ENCODE measurements at regions of chr2 and their contacts with region 1.

Region 1: DNA sequence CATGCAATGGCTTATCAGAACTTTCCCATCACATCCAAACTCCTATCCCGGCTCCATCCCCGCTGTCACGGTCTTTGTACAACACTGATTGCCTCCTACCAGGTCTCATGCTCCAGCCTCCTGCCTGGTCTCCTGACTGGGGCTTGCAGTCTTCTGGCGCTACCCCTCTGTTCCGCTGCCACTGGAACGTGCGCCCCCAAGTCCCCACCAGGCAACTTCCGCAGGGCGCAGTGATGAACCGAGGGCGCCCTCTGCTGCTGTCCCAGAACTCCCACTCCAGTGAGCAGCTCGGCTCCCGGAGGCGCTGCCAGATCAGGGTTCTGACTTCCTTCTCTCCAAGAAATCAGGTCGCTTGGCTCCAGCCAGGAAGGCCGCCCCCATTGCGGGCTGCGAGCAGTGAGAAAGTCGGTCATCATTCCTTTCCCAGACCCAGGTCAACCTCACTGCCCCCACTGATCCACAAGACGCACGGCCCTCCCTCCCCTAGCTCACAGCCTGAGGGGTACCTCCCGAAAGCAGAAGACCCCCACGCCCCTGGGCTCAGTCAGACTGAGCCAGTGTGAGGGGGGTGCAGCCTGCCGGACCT is 43.9 kb upstream of the RAB11FIP5 start:
- DNase-seq: peak; percentile 83
- H3K4me3 ChIP-seq: peak overlapping the region; percentile 6 to 49; a peak in 1 of 4 replicates
- H3K27ac ChIP-seq: no peak overlapping the region
- H3K4me1 ChIP-seq: peaks cover 0 to 5% of the 10 kb centered on the region in 2 experiments; a peak in 1 of 4 replicates
- H3K27me3 ChIP-seq: no peaks in the 10 kb centered on the region
- CTCF ChIP-seq: peak; percentile 87
- EP300 ChIP-seq: no peak
- RAD21 ChIP-seq: peak; percentile 92

Region 2: GRCh38 chr2:72980535-72981217 is 176.0 kb before region 1 on chr2:
- CTCF ChIA-PET with region 1: interaction called, 11 read pairs
- POLR2A ChIA-PET with region 1: no interaction called
- DNase-seq: no peak
- H3K4me3 ChIP-seq: no peak overlapping the region
- H3K27ac ChIP-seq: no peak overlapping the region
- H3K4me1 ChIP-seq: peaks cover 0 to 24% of the 10 kb centered on the region in 2 experiments; a peak in 1 of 4 replicates
- H3K27me3 ChIP-seq: no peaks in the 10 kb centered on the region
- CTCF ChIP-seq: no peak
- EP300 ChIP-seq: no peak
- RAD21 ChIP-seq: no peak

Region 3: DNA sequence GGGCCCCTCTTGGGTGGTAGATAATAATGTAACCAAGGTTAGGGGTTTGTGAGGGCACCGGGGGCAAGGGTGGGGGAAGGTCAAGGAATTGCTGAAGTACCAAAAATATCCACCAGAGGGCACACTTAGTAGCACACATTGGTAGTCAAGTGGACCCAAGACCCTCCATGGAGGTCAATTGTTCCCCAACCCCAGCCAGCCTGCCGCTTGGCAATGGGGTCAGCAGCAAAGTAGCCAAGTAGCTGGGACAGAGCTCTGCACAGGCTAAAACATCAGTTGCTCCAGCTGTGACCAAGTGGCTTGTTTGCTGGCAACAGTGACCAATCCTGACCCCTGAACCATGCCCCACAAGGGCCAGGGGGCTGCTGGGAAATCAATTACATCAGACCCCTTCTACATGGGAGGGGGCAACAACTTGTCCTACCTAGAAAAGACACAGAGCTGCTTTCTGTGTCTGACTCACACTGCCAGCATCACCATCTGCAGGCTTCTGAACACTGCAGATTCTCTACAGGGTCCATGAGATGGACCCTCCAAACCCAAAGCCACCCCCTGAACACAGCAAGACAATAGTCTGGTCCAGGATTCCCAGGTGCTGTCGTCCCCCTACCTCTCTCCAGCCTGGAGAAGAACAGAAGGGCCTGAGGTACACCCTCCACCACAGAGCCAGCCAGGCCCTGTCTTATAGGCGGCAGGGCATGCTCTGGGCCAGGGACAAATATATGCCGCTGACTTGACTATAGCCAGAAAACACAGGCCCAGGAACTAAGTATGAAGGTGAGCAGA is 163.3 kb before region 1 on chr2:
- CTCF ChIA-PET with region 1: interaction called, 30 read pairs
- POLR2A ChIA-PET with region 1: no interaction called
- DNase-seq: peak; percentile 85
- H3K4me3 ChIP-seq: no peak overlapping the region; a peak in 1 of 4 replicates
- H3K27ac ChIP-seq: no peak overlapping the region
- H3K4me1 ChIP-seq: peaks cover 0 to 14% of the 10 kb centered on the region in 2 experiments; a peak in 1 of 4 replicates
- H3K27me3 ChIP-seq: no peaks in the 10 kb centered on the region
- CTCF ChIP-seq: peak; percentile 82
- EP300 ChIP-seq: no peak
- RAD21 ChIP-seq: peak; percentile 58

Region 4: GRCh38 chr2:73071360-73072133 is 85.1 kb before region 1 on chr2 and contains the start of gene SFXN5:
- CTCF ChIA-PET with region 1: interaction called, 267 read pairs
- POLR2A ChIA-PET with region 1: no interaction called
- DNase-seq: peak; percentile 99
- H3K4me3 ChIP-seq: peak within 1 kb of the TSS; percentile 92 to 98
- H3K27ac ChIP-seq: peak within 1 kb of the TSS; percentile 81 to 88
- H3K4me1 ChIP-seq: peaks cover 3 to 15% of the 10 kb centered on the region in 2 experiments; a peak in 2 of 4 replicates
- H3K27me3 ChIP-seq: no peaks in the 10 kb centered on the region
- CTCF ChIP-seq: peak; percentile 25
- EP300 ChIP-seq: no peak
- RAD21 ChIP-seq: no peak
- polyA plus RNA-seq, gene SFXN5: 9.9 and 11.0 TPM in 2 replicates

Region 5: GRCh38 chr2:73112913-73113633 is 43.6 kb before region 1 on chr2 and contains the start of gene RAB11FIP5:
- CTCF ChIA-PET with region 1: interaction called, 10 read pairs
- POLR2A ChIA-PET with region 1: no interaction called
- DNase-seq: peak; percentile 95
- H3K4me3 ChIP-seq: peak within 1 kb of the TSS; percentile 85 to 89
- H3K27ac ChIP-seq: peak within 1 kb of the TSS; percentile 80 to 98
- H3K4me1 ChIP-seq: peaks cover 14 to 34% of the 10 kb centered on the region in 2 experiments
- H3K27me3 ChIP-seq: no peaks in the 10 kb centered on the region
- CTCF ChIP-seq: no peak
- EP300 ChIP-seq: peak in 1 of 2 experiments; percentile 29; a peak in 1 of 4 replicates
- RAD21 ChIP-seq: no peak
- polyA plus RNA-seq, gene RAB11FIP5: 16.4 and 17.1 TPM in 2 replicates

Region 6: DNA sequence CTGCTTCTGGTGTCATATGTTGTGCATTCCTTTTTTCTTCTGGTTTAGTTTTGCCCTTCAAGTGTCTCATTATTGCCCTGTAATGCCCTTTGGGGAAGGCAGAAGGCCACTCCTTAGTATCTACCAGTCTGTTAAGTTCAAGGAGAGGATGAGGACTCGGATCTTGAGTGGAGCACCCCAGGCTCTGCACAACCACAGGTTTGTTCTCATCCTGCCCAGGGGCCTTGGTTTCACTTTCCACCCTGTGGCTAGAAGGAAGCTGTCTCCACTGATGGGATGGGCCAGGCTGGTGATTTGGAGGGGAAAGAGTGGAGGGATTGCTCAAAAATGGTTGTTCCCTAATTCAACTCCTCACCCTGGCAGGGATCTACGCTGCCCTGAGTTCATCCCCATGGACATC is 13.7 kb before region 1 on chr2:
- CTCF ChIA-PET with region 1: interaction called, 16 read pairs
- POLR2A ChIA-PET with region 1: no interaction called
- DNase-seq: no peak
- H3K4me3 ChIP-seq: no peak overlapping the region
- H3K27ac ChIP-seq: no peak overlapping the region
- H3K4me1 ChIP-seq: no peaks in the 10 kb centered on the region
- H3K27me3 ChIP-seq: no peaks in the 10 kb centered on the region
- CTCF ChIP-seq: no peak
- EP300 ChIP-seq: no peak
- RAD21 ChIP-seq: no peak

Measured in SK-N-SH (cell line).